SK-N-SH (cell line): ENCODE measurements at regions of chr1 and their contacts with region 1.

Region 1: GRCh38 chr1:27102707-27103491 is 52.0 kb downstream of the SLC9A1 start:
- DNase-seq: peak; percentile 93
- H3K4me3 ChIP-seq: no peak overlapping the region; a peak in 1 of 4 replicates
- H3K27ac ChIP-seq: no peak overlapping the region
- H3K4me1 ChIP-seq: peaks cover 15 to 19% of the 10 kb centered on the region in 2 experiments; a peak in 3 of 4 replicates
- H3K27me3 ChIP-seq: no peaks in the 10 kb centered on the region
- CTCF ChIP-seq: peak; percentile 95
- EP300 ChIP-seq: no peak
- RAD21 ChIP-seq: peak; percentile 93

Region 2: DNA sequence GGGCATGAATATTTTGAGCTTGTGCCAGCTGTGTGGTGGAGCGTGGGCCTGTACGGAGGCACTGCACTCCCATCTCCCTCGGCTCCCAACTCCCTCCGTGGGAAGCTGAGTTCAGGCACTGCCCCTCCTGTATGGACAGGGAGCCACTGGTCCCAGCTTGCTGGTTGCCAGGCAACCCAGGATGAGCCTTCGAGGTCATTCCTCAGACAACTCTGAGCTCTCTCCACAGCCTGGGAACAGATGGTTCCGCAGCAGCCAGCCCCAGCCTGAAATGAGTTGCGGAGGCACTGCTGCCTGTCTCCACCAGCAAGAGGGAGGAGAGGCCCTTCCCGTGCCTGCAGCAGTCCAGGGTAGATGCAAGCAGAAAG is 31.9 kb before region 1 on chr1:
- CTCF ChIA-PET with region 1: interaction called, 10 read pairs
- POLR2A ChIA-PET with region 1: no interaction called
- DNase-seq: peak; percentile 86
- H3K4me3 ChIP-seq: no peak overlapping the region
- H3K27ac ChIP-seq: no peak overlapping the region
- H3K4me1 ChIP-seq: peaks cover 0 to 11% of the 10 kb centered on the region in 2 experiments; a peak in 1 of 4 replicates
- H3K27me3 ChIP-seq: no peaks in the 10 kb centered on the region
- CTCF ChIP-seq: no peak
- EP300 ChIP-seq: no peak
- RAD21 ChIP-seq: no peak

Region 3: GRCh38 chr1:27142464-27142863 is 39.6 kb after region 1 on chr1:
- CTCF ChIA-PET with region 1: interaction called, 22 read pairs
- POLR2A ChIA-PET with region 1: no interaction called
- DNase-seq: no peak
- H3K4me3 ChIP-seq: no peak overlapping the region
- H3K27ac ChIP-seq: no peak overlapping the region
- H3K4me1 ChIP-seq: peaks cover 36 to 49% of the 10 kb centered on the region in 2 experiments; a peak in 2 of 4 replicates
- H3K27me3 ChIP-seq: no peaks in the 10 kb centered on the region
- CTCF ChIP-seq: no peak
- EP300 ChIP-seq: no peak
- RAD21 ChIP-seq: no peak

Region 4: DNA sequence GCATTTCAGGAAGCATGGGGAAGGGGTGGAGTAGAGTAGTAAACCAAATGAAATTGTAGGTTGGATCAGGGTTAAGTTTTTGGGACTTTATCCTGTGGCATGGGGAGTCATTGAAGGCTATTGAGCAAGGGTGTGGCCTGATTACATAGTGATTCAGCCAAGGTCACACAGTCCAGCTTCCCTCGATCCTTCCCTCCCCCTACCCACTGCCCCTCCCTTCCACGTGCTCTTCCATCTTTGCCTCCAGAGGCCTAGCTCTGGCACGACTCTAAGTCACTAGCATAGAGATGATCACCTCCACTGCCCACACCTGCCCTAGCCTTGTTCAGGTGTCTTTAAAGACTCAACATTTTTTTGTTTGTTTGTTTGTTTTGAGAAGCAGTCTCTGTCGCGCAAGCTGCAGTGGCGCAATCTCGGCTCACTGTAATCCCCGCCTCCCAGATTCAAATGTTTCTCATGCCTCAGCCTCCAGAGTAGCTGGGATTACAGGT is 89.2 kb after region 1 on chr1:
- CTCF ChIA-PET with region 1: interaction called, 25 read pairs
- POLR2A ChIA-PET with region 1: no interaction called
- DNase-seq: no peak
- H3K4me3 ChIP-seq: no peak overlapping the region
- H3K27ac ChIP-seq: no peak overlapping the region
- H3K4me1 ChIP-seq: no peaks in the 10 kb centered on the region
- H3K27me3 ChIP-seq: no peaks in the 10 kb centered on the region
- CTCF ChIP-seq: no peak
- EP300 ChIP-seq: no peak
- RAD21 ChIP-seq: no peak

Region 5: DNA sequence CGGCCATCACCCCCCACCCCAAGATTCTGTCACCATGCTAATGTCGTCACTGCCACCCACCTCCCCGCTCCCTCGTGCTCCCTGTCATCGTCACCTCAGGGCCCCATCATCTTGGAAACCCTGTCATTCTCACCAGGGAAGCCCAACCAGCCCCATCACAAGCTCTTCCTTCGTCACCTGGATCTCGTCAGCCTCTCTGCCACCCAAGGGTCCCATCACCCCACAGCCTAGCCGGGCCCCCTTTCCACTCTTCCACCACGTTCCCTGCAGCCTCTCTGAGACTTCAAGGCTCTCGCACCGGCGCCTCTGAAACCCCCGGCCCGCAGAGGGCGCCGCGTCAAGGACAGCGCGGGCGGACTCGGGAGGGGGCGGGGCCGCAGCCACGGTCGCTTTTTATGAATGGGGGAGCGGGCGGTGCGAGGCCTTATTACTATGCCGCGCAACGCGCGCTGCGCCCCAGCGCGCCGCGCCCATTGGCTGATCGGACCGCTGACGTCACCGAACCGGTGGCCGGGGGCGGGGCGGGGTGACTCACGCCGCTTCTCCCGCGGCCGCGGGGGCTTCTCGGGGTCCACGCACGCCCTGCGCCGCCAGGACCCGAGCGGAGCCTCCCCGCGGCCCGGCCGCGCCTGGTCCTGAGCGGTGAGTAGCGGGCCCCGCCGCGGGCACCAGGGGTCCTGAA is 289.3 kb after region 1 on chr1 and contains the start of gene GPR3:
- CTCF ChIA-PET with region 1: interaction called, 11 read pairs
- POLR2A ChIA-PET with region 1: no interaction called
- DNase-seq: peak; percentile 99
- H3K4me3 ChIP-seq: peak within 1 kb of the TSS; percentile 71 to 94
- H3K27ac ChIP-seq: peak within 1 kb of the TSS; percentile 34 to 60; a peak in 2 of 4 replicates
- H3K4me1 ChIP-seq: peaks cover 0 to 28% of the 10 kb centered on the region in 2 experiments; a peak in 2 of 4 replicates
- H3K27me3 ChIP-seq: no peaks in the 10 kb centered on the region; the same call in 1 of the 2 replicates
- CTCF ChIP-seq: peak; percentile 64
- EP300 ChIP-seq: no peak
- RAD21 ChIP-seq: peak; percentile 45
- polyA plus RNA-seq, gene GPR3: 5.8 and 6.0 TPM in 2 replicates